ENCODE measurements at regions of chr14 and their contacts with region 1.

Region 1: GRCh38 chr14:77151918-77152588 is 10.5 kb upstream of the ZDHHC22 start:
- DNase-seq: no peak
- H3K4me3 Mint-ChIP-seq: no peak overlapping the region
- H3K27ac Mint-ChIP-seq: no peak overlapping the region
- H3K4me1 Mint-ChIP-seq: no peaks in the 10 kb centered on the region
- H3K27me3 Mint-ChIP-seq: peaks cover 31% of the 10 kb centered on the region

Region 2: DNA sequence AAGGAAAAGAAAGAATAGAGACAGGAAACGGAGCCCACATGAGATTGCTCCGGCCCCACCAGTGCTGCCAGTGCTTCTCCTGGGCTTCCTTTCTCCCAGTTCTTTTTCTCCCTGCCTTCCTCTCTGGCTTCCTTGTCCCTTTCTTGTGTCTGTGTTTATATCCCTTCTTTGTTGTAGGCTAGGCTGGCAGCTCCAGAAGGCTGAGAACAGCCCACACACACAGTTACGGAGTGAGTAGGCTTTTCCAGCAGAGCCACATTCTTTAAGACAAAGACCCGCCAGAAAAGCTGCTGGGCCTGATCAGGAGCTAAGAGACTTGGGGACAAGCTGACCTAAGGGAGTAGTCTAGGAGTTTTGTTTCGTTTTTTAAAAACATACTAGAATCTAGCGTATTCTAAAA is 41.0 kb before region 1 on chr14:
- CTCF ChIA-PET with region 1: no interaction called
- POLR2A ChIA-PET with region 1: no interaction called
- intact Hi-C with region 1: no loop called
- DNase-seq: no peak
- H3K4me3 Mint-ChIP-seq: no peak overlapping the region
- H3K27ac Mint-ChIP-seq: no peak overlapping the region
- H3K4me1 Mint-ChIP-seq: no peaks in the 10 kb centered on the region
- H3K27me3 Mint-ChIP-seq: no peaks in the 10 kb centered on the region

Region 3: DNA sequence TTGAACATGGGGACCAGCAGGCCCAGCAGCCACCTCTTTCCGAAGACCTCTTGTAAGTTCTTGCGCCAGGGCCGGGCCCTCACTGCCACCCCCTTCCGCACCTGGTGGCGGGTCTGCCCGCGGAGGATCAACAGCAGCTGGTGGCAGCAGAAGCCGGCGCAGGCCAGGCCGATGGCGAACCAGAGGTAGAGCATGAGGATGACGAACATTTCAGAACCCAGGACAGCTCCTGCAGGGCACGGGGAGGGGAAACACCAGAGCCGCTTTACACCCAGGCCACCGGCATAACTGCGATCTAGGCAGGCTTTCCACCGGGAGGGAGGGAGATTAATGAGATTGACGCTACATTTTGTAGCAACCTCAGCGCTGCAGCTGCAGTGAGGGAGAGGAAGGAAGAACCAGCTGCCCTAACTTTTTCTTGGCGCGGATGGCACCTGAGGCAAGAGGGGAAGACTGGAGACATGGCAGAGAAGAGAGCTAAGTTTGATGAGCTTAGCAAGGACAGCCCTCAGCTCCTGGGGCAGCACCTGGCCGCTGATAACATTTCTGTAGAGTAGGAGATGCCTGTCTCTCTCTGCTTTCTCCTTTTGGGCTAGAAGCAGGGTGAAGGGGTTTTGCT is 18.2 kb before region 1 on chr14:
- CTCF ChIA-PET with region 1: interaction called, 13 read pairs
- POLR2A ChIA-PET with region 1: no interaction called
- intact Hi-C with region 1: no loop called
- DNase-seq: peak; percentile 76
- H3K4me3 Mint-ChIP-seq: no peak overlapping the region
- H3K27ac Mint-ChIP-seq: no peak overlapping the region
- H3K4me1 Mint-ChIP-seq: peaks cover 5% of the 10 kb centered on the region
- H3K27me3 Mint-ChIP-seq: peaks cover 52% of the 10 kb centered on the region

Region 4: DNA sequence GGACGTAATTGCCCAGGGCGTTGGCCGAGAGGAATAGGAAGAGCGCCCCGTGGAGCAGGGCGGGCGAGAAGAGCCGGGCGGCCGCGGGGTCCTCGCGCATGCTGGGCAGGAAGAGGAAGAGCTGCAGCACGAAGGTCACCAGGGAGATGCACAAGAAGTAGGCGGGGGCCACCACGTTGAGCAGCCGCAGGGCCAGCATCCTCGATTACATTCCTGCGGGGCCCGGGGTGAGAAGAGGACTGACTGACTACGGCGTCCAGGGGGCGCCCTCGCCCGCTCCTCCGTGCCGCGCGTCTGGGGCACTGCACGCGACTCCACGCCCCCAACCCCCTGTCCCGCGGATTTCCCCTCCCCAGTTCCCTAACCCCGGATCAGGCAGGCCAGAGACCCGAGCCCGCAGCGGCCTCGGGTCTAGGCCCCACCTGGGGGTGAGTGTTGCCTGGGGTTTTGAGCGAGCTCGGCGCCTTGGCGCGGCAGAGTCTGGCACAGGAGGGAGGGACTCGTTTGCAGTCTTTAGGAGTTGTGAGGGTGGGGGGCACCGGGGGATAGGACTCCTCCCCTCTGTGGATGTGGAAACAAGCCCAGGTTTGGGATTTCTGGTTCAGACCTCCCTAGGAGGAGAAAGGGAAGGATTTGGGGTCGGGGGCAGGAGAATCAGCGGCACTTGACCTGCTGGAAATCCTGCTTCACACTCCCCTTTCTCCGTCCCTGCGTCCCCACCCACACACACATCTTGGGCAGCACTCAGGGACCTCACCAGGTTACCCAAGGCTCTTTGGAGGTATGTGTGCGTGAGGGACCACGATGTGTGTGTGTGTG is 12.3 kb before region 1 on chr14:
- CTCF ChIA-PET with region 1: interaction called, 29 read pairs
- POLR2A ChIA-PET with region 1: no interaction called
- intact Hi-C with region 1: no loop called
- DNase-seq: peak; percentile 67
- H3K4me3 Mint-ChIP-seq: peak overlapping the region; percentile 25
- H3K27ac Mint-ChIP-seq: no peak overlapping the region
- H3K4me1 Mint-ChIP-seq: peaks cover 23% of the 10 kb centered on the region
- H3K27me3 Mint-ChIP-seq: peaks cover 68% of the 10 kb centered on the region

Region 5: GRCh38 chr14:77212943-77213678 is 61.1 kb after region 1 on chr14:
- CTCF ChIA-PET with region 1: interaction called, 32 read pairs
- POLR2A ChIA-PET with region 1: no interaction called
- intact Hi-C with region 1: loop called (anchors 5 kb)
- DNase-seq: peak; percentile 61
- H3K4me3 Mint-ChIP-seq: no peak overlapping the region
- H3K27ac Mint-ChIP-seq: no peak overlapping the region
- H3K4me1 Mint-ChIP-seq: peaks cover 4% of the 10 kb centered on the region
- H3K27me3 Mint-ChIP-seq: peaks cover 21% of the 10 kb centered on the region

Region 6: GRCh38 chr14:77882098-77882497 is 730.0 kb after region 1 on chr14:
- CTCF ChIA-PET with region 1: no interaction called
- POLR2A ChIA-PET with region 1: no interaction called
- intact Hi-C with region 1: no loop called
- DNase-seq: no peak
- H3K4me3 Mint-ChIP-seq: no peak overlapping the region
- H3K27ac Mint-ChIP-seq: no peak overlapping the region
- H3K4me1 Mint-ChIP-seq: no peaks in the 10 kb centered on the region
- H3K27me3 Mint-ChIP-seq: no peaks in the 10 kb centered on the region

Measured in activated CD4-positive, alpha-beta memory T cell treated with anti-CD3 and anti-CD28 coated beads for 36 hours (primary cell).